Sciatic nerve (tissue), 2 donors: ENCODE measurements at regions of chr9 and their contacts with region 1.

Region 1: DNA sequence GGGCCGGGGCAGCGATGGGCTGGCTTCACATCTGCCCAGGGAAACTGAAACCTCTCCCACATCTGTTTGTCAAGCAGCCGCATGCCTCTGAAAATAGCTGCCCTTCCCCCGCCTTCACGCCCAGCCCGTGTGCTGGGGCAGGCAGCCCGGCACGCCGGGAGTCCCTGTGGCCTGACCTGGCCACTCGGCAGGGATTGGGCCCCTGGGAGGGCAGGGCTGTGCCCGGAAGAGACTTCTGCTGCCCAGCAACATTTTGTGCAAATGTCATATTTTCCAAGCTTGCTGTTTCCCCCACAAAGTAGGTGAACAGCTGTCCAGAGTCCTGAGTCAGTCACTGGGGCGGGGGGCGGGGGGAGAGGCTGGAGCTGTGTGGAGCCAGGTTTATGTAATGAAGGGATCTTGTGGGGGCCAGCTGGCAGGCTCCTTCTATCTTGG is 8.2 kb downstream of the COL27A1 start:
- DNase-seq: no peak
- ATAC-seq: peak; percentile 69

Region 2: DNA sequence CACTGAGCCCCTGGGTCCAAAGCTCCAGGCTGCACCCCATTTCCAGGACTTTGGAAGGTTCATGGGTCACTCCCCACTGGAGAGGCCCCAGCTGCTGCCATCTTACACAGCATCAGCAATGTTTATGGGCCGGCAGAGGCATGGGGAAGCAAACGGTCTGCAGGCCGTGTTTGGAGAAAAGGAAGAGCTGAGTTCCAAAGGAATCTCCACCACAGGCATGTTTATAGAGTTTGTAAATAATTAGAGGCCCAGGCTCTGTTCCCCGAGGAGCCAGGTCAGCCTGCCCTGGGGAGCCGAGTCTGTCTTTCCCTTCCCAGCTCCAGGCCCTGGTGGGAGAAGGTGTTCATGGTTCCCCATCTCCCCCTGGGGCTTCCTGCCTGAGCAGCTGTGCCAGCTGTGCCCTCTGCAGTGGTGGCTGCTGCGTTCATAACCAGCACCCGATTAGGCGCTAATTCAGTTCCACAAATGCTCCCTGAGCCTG is 56.6 kb after region 1 on chr9:
- intact Hi-C with region 1: loop called (anchors 2 kb)
- DNase-seq: no peak
- ATAC-seq: no peak